CD4-positive, alpha-beta T cell (primary cell): ENCODE measurements at regions of chr7 and their contacts with region 1.

Region 1: GRCh38 chr7:6026011-6026819 is 5.0 kb upstream of the ANKRD61 start:
- DNase-seq: peak; percentile 54 to 87 (median 69)
- ATAC-seq: peak; percentile 100
- H3K4me3 ChIP-seq: peak overlapping the region; percentile 60
- H3K4me3 Mint-ChIP-seq: peak overlapping the region; percentile 82
- H3K27ac ChIP-seq: peak overlapping the region; percentile 36 to 64
- H3K27ac Mint-ChIP-seq: peak overlapping the region; percentile 93
- H3K4me1 ChIP-seq: peaks cover 21% of the 10 kb centered on the region
- H3K4me1 Mint-ChIP-seq: peaks cover 24% of the 10 kb centered on the region
- H3K27me3 ChIP-seq: no peaks in the 10 kb centered on the region
- H3K27me3 Mint-ChIP-seq: no peaks in the 10 kb centered on the region
- CTCF ChIP-seq: peak; percentile 49

Region 2: GRCh38 chr7:6008668-6009611 is 17.3 kb before region 1 on chr7 and contains the starts of genes AIMP2 and PMS2:
- CTCF ChIA-PET with region 1: interaction called, 3 read pairs
- POLR2A ChIA-PET with region 1: interaction called, 3 read pairs
- intact Hi-C with region 1: loop called in 1 of 2 experiments (anchors 1 kb)
- DNase-seq: peak; percentile 87 to 97 (median 93)
- ATAC-seq: peak; percentile 82
- H3K4me3 ChIP-seq: peak within 1 kb of the TSS; percentile 89
- H3K4me3 Mint-ChIP-seq: peak within 1 kb of the TSS; percentile 99
- H3K27ac ChIP-seq: peak within 1 kb of the TSS; percentile 73 to 85
- H3K27ac Mint-ChIP-seq: peak within 1 kb of the TSS; percentile 97
- H3K4me1 ChIP-seq: peaks cover 23% of the 10 kb centered on the region
- H3K4me1 Mint-ChIP-seq: peaks cover 39% of the 10 kb centered on the region
- H3K27me3 ChIP-seq: no peaks in the 10 kb centered on the region
- H3K27me3 Mint-ChIP-seq: no peaks in the 10 kb centered on the region
- CTCF ChIP-seq: peak; percentile 23
- total RNA-seq, gene AIMP2: 4.3 to 5.4 TPM
- total RNA-seq, gene PMS2: 10.8 to 15.0 TPM

Region 3: DNA sequence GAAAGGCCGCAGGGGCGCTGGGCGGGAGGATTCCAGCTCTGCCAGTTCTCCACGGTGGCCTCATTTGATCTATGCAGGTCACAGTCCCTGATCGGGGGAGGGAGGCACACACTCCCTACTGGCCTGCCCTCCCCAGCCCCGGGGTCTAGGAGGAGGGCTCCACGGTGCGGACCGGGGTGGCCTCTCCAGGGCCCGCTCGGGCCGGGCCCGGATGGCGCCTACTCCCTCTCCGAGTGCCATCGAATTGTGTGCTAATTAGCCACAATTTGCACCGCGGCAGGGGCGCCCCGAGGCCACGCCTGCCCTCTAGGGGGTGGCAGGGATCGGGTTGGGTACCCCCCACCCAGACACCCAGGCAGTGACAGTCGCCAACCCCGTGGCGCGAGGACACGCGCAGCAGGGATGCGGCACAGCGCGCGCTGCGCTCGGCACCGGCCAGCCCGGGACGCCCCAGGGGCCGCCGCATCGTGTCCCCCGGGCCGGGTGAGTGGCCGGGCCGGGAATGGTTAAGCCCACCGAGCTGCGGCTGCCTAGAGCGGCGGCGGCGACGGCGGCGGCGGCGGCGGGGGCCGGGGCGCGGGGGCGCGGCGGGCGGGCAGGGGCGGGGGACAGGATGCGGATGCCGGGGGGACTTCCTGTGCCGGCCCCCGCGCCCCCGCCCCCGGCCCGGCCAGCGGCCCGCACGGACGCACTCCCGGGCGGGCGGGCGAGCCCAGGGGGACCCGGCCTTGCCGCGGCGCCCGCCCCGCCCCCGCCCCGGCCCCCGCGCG is 588.9 kb after region 1 on chr7 and contains the start of gene ZNF853:
- CTCF ChIA-PET with region 1: no interaction called
- POLR2A ChIA-PET with region 1: no interaction called
- intact Hi-C with region 1: no loop called
- DNase-seq: peak in 6 of 14 experiments; percentile 22 to 44 (median 37)
- ATAC-seq: peak; percentile 65
- H3K4me3 ChIP-seq: peak within 1 kb of the TSS; percentile 53
- H3K4me3 Mint-ChIP-seq: peak within 1 kb of the TSS; percentile 86
- H3K27ac ChIP-seq: no peak within 1 kb of the TSS
- H3K27ac Mint-ChIP-seq: peak within 1 kb of the TSS; percentile 4
- H3K4me1 ChIP-seq: peaks cover 29% of the 10 kb centered on the region
- H3K4me1 Mint-ChIP-seq: peaks cover 22% of the 10 kb centered on the region
- H3K27me3 ChIP-seq: peaks cover 0 to 11% of the 10 kb centered on the region in 2 experiments
- H3K27me3 Mint-ChIP-seq: peaks cover 5% of the 10 kb centered on the region
- CTCF ChIP-seq: no peak
- total RNA-seq, gene ZNF853: 2.5 to 2.7 TPM